CD4-positive, alpha-beta T cell (primary cell): ENCODE measurements at regions of chr2 and their contacts with region 1.

Region 1: DNA sequence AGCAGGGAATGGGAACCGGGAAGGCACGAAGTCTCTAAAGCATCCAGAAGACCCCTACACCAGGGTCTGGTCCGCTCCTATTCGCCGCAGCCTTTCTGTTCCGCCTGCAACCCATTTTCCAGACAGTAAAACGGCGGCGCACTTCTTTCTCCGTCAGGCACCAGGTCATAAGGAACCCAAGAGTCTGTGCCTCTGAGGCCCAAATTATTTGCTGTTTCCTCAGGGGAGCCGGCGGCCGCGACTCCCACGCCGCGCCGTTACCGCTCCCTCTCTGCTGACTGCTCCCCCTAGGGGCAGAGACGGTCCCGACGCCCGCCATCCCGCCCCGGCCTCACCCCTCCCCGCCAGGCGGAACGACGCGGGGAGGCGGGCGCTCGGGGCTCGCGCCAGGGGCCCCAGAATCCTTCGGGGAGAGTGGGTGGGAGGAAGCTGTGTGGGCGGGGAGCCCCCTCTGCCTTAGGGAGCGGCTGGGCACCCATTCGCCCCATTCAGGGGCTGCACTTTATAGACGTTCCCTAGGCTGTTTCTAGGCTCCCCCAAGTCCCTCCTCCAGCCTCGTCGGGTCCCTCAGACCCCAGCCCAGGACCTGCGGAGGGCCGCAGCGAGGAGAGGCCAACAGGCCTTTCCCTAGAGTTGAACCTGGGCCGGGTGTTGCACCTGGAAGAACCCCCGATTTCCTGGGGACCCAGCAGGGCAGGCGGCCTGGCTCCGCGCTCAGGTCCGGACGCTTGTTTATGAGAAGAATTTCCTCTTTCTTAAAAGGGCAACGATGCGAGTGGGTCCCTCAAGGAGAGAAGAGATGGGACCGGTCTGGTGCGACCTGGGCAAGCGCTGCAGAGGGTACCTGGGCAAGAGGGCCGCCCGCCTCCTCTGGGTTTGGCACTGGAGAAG is 3.6 kb upstream of the CTDSP1 start:
- DNase-seq: peak; percentile 88 to 98 (median 93)
- ATAC-seq: peak; percentile 67
- H3K4me3 ChIP-seq: peak overlapping the region; percentile 71
- H3K4me3 Mint-ChIP-seq: peak overlapping the region; percentile 94
- H3K27ac ChIP-seq: peak overlapping the region; percentile 93 to 96
- H3K27ac Mint-ChIP-seq: peak overlapping the region; percentile 99
- H3K4me1 ChIP-seq: peaks cover 58% of the 10 kb centered on the region
- H3K4me1 Mint-ChIP-seq: peaks cover 41% of the 10 kb centered on the region
- H3K27me3 ChIP-seq: no peaks in the 10 kb centered on the region
- H3K27me3 Mint-ChIP-seq: no peaks in the 10 kb centered on the region
- CTCF ChIP-seq: peak; percentile 75

Region 2: DNA sequence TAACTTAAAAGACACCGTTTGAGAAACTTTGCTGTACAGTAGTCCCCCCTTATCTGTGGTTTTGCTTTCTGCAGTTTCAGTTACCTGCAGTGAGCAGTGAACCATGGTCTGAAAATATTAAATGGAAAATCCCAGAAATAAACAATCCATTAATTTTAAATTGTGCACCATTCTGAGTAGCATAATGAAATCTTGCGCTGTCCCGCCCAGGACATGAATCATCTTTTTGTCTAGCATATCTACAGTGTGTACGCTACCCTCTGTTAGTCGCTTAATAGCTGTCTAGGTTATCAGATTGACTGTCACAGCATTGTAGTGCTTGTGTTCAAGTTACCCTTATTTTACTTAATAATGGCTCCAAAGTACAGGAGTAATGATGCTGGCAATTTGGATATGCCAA is 173.0 kb before region 1 on chr2:
- CTCF ChIA-PET with region 1: no interaction called
- POLR2A ChIA-PET with region 1: interaction called, 8 read pairs
- intact Hi-C with region 1: loop called (anchors 5 kb)
- DNase-seq: peak in 6 of 14 experiments; percentile 11 to 50 (median 37)
- ATAC-seq: peak; percentile 50
- H3K4me3 ChIP-seq: peak overlapping the region; percentile 4
- H3K4me3 Mint-ChIP-seq: peak overlapping the region; percentile 67
- H3K27ac ChIP-seq: peak overlapping the region; percentile 12 to 45
- H3K27ac Mint-ChIP-seq: peak overlapping the region; percentile 96
- H3K4me1 ChIP-seq: peaks cover 86% of the 10 kb centered on the region
- H3K4me1 Mint-ChIP-seq: peaks cover 91% of the 10 kb centered on the region
- H3K27me3 ChIP-seq: no peaks in the 10 kb centered on the region
- H3K27me3 Mint-ChIP-seq: no peaks in the 10 kb centered on the region
- CTCF ChIP-seq: no peak

Region 3: DNA sequence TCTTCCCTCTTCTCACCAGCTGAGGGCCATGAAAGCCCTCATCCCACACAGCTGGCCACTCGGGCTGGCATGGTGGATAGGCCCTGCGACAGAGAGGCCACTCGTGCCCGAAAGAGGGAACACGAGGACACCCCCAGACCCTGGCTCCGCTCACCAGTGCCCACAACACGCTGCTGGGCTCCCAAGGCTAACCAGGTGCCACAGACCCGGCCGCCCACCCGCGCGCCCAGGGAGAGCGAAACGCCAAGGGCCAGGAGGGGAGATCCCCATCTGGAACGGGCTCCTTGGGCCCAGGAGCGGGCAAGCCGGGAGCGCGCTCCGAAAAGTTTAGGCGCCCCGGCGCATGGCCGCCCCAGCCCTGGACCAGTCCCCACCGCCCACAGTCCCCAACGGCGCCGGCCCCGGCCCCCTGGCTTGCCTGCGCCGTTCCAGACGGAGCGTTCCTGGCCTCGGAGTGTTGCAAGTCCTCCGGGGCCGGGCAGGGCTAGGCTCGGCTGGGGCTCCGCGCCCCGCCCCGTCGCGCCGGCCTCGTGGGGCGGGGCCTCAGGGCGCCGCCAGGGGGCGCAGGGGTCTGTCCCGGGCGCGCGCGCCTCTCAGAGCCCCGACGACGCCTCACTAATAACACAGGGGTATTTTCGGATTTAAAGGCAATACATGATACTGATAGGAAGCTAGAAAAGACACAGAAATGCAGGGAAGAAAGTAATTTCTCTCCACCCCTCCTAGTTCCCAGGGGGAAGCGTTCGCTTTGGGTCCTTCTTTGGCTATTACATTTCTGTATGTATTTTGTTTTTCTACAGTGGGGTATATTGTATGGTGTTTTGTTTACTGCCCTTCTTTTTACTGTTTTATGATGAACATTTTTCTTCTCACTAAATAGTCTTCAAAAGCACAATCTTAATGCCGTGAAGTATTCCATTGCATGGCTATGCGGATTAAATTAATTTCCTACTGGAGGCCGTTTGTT is 103.7 kb before region 1 on chr2 and contains the start of gene TMBIM1:
- CTCF ChIA-PET with region 1: interaction called, 22 read pairs
- POLR2A ChIA-PET with region 1: interaction called, 45 read pairs
- intact Hi-C with region 1: loop called in 1 of 2 experiments (anchors 1 kb)
- DNase-seq: peak; percentile 62 to 92 (median 76)
- ATAC-seq: peak; percentile 76
- H3K4me3 ChIP-seq: peak within 1 kb of the TSS; percentile 99
- H3K4me3 Mint-ChIP-seq: peak within 1 kb of the TSS; percentile 95
- H3K27ac ChIP-seq: peak within 1 kb of the TSS; percentile 89 to 96
- H3K27ac Mint-ChIP-seq: peak within 1 kb of the TSS; percentile 99
- H3K4me1 ChIP-seq: peaks cover 73% of the 10 kb centered on the region
- H3K4me1 Mint-ChIP-seq: peaks cover 62% of the 10 kb centered on the region
- H3K27me3 ChIP-seq: no peaks in the 10 kb centered on the region
- H3K27me3 Mint-ChIP-seq: no peaks in the 10 kb centered on the region
- CTCF ChIP-seq: peak; percentile 59
- total RNA-seq, gene TMBIM1: 99.2 to 102 TPM

Region 4: DNA sequence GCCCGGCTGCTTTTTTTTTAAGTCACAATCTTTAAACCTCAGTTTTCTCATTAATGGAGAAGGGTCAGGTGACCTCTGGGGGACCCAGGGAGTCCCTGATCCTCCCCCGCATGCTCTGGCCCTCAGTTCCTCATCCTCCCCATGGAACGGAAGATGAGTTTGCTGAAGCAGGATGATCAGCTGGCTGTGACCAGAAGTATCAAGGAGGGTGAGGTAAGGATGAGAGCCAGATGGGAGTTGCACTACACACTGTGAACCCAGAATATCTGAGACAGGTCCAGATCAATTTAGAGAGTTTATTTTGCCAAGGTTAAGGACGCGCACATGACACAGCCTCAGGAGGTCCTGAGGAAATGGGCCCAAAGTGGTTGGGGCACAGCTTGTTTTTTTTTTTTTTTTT is 35.6 kb before region 1 on chr2:
- CTCF ChIA-PET with region 1: interaction called, 3 read pairs
- POLR2A ChIA-PET with region 1: interaction called, 6 read pairs
- intact Hi-C with region 1: loop called (anchors 2 to 5 kb)
- DNase-seq: peak in 2 of 14 experiments; percentile 45 to 63
- ATAC-seq: no peak
- H3K4me3 ChIP-seq: no peak overlapping the region
- H3K4me3 Mint-ChIP-seq: no peak overlapping the region
- H3K27ac ChIP-seq: no peak overlapping the region
- H3K27ac Mint-ChIP-seq: no peak overlapping the region
- H3K4me1 ChIP-seq: peaks cover 8% of the 10 kb centered on the region
- H3K4me1 Mint-ChIP-seq: peaks cover 2% of the 10 kb centered on the region
- H3K27me3 ChIP-seq: no peaks in the 10 kb centered on the region
- H3K27me3 Mint-ChIP-seq: no peaks in the 10 kb centered on the region
- CTCF ChIP-seq: no peak

Region 5: DNA sequence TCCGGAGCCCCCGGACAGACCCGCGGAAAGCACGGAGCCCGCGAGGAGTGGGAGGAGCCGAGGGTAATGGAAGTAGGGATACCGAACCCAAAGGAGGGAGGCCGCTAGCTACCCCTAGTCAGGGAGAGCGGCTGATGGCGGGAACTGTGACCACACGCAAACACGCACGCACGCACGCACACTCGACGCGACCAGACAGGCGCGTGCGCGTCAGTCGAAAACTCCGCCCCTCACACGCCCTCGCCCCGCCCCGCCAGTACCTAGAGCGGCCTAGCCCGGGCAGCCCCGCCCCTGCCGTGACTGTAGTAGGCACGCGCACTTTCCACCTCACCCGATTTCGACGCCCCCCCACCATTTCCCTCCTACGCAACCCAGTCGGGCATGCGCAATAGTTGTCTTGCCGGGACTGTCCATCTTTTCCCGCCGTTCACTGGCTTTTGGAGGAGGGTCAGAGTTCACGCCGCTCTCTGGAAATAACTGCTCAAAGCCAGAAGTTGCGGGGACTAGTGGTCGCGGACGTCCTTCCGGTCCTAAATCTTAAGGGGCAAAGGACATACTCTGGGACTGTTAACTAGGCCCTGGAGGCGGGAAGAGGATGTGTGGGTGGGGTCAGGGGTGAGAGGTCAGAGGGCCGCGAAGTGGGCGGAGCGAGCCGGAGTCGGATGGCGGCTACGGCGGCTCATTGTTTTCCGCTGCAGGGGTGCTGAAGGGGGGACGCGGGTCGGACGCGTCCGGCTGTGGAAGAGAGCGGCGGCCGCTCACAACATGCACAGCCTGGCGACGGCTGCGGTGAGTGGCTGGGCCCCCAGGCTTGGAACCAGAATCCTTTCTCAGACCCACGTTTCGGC is 172.4 kb after region 1 on chr2 and contains the starts of genes CNOT9 and USP37:
- CTCF ChIA-PET with region 1: no interaction called
- POLR2A ChIA-PET with region 1: interaction called, 5 read pairs
- intact Hi-C with region 1: loop called in 1 of 2 experiments (anchors 2 kb)
- DNase-seq: peak; percentile 99 to 100 (median 100)
- ATAC-seq: peak; percentile 85
- H3K4me3 ChIP-seq: peak within 1 kb of the TSS; percentile 77
- H3K4me3 Mint-ChIP-seq: peak within 1 kb of the TSS; percentile 96
- H3K27ac ChIP-seq: peak within 1 kb of the TSS; percentile 98 to 99
- H3K27ac Mint-ChIP-seq: peak within 1 kb of the TSS; percentile 97
- H3K4me1 ChIP-seq: peaks cover 32% of the 10 kb centered on the region
- H3K4me1 Mint-ChIP-seq: peaks cover 77% of the 10 kb centered on the region
- H3K27me3 ChIP-seq: no peaks in the 10 kb centered on the region
- H3K27me3 Mint-ChIP-seq: no peaks in the 10 kb centered on the region
- CTCF ChIP-seq: no peak
- total RNA-seq, gene CNOT9: 62.8 to 66.8 TPM
- total RNA-seq, gene USP37: 20.2 to 24.4 TPM

Region 6: DNA sequence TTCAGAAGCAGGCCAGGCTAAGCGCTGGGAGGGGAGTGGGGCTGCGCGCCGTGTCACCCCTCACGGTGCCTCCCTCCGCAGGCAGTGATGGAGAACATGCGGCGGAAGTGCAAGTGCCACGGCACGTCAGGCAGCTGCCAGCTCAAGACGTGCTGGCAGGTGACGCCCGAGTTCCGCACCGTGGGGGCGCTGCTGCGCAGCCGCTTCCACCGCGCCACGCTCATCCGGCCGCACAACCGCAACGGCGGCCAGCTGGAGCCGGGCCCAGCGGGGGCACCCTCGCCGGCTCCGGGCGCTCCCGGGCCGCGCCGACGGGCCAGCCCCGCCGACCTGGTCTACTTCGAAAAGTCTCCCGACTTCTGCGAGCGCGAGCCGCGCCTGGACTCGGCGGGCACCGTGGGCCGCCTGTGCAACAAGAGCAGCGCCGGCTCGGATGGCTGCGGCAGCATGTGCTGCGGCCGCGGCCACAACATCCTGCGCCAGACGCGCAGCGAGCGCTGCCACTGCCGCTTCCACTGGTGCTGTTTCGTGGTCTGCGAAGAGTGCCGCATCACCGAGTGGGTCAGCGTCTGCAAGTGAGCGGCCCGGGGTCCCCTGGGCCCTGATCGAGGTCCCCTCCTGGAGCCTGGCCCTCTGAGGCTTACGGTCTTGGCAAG is 496.8 kb after region 1 on chr2:
- CTCF ChIA-PET with region 1: no interaction called
- POLR2A ChIA-PET with region 1: interaction called, 3 read pairs
- intact Hi-C with region 1: loop called in 1 of 2 experiments (anchors 5 kb)
- DNase-seq: peak; percentile 73 to 97 (median 84)
- ATAC-seq: peak; percentile 73
- H3K4me3 ChIP-seq: peak overlapping the region; percentile 56
- H3K4me3 Mint-ChIP-seq: peak overlapping the region; percentile 82
- H3K27ac ChIP-seq: peak overlapping the region; percentile 83 to 91
- H3K27ac Mint-ChIP-seq: peak overlapping the region; percentile 91
- H3K4me1 ChIP-seq: peaks cover 65% of the 10 kb centered on the region
- H3K4me1 Mint-ChIP-seq: peaks cover 50% of the 10 kb centered on the region
- H3K27me3 ChIP-seq: no peaks in the 10 kb centered on the region
- H3K27me3 Mint-ChIP-seq: no peaks in the 10 kb centered on the region
- CTCF ChIP-seq: peak; percentile 45